Body of pancreas (tissue), 4 donors: ENCODE measurements at regions of chr10 and their contacts with region 1.

Region 1: GRCh38 chr10:77377678-77378352 is 259.8 kb downstream of the KCNMA1 start:
- DNase-seq: peak; percentile 50 to 74 (median 67)
- ATAC-seq: peak; percentile 78
- H3K4me3 ChIP-seq: no peak overlapping the region
- H3K27ac ChIP-seq: peak overlapping the region; percentile 18 to 53 (median 33)
- H3K4me1 ChIP-seq: peaks cover 40% of the 10 kb centered on the region
- H3K27me3 ChIP-seq: no peaks in the 10 kb centered on the region
- CTCF ChIP-seq: peak; percentile 17 to 70 (median 58)
- POLR2A ChIP-seq: no peak

Region 2: GRCh38 chr10:76382381-76382851 is 995.4 kb before region 1 on chr10:
- intact Hi-C with region 1: no loop called
- DNase-seq: no peak
- ATAC-seq: no peak
- H3K4me3 ChIP-seq: no peak overlapping the region
- H3K27ac ChIP-seq: no peak overlapping the region
- H3K4me1 ChIP-seq: no peaks in the 10 kb centered on the region
- H3K27me3 ChIP-seq: no peaks in the 10 kb centered on the region
- CTCF ChIP-seq: no peak
- POLR2A ChIP-seq: no peak

Region 3: GRCh38 chr10:76632777-76633071 is 745.1 kb before region 1 on chr10:
- intact Hi-C with region 1: no loop called
- DNase-seq: peak; percentile 61 to 71 (median 68)
- ATAC-seq: peak; percentile 81
- H3K4me3 ChIP-seq: no peak overlapping the region
- H3K27ac ChIP-seq: no peak overlapping the region
- H3K4me1 ChIP-seq: no peaks in the 10 kb centered on the region
- H3K27me3 ChIP-seq: no peaks in the 10 kb centered on the region
- CTCF ChIP-seq: peak; percentile 27 to 73 (median 63)
- POLR2A ChIP-seq: no peak

Region 4: DNA sequence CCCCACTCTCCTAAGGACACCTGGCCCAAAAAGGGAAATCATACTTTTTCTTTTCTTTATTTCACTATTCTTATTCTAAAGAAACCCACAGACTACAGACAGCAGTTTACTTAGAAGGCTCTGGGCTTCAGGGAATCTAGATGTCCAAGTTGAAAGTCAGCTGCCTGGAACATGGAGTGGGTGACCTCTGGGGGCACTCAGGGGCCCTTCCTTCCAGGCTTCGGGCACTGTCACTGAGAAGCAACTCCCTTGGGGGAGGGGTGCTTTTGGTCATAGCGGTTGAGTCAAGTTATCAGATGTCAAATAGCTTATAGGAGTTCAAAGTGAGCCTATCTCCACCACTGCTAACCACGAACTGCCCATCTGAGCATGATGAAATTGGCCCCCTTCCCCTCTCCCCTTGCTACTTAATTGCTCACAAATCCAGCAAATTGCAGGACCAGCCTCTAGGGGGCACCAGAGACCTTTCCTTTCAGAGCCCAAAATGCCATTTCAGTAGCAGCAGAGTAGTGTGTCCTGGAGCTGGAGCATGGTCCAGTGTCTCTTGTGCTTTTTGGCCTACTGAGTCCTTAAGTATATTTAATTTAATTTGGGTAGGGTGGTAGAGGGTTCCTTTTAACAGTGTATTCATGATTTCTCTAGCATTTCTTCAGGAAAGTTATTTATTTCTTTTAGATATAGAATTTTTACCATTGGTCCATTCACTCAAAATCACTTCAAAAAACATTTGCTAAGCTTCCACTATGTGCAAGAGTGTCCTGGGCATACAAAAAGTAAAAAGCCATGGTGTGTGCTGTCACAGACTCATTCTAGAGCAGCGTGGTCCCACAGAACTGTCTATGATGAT is 204.0 kb before region 1 on chr10:
- intact Hi-C with region 1: loop called (anchors 10 kb)
- DNase-seq: peak; percentile 78 to 87 (median 80)
- ATAC-seq: peak; percentile 79
- H3K4me3 ChIP-seq: no peak overlapping the region
- H3K27ac ChIP-seq: no peak overlapping the region
- H3K4me1 ChIP-seq: no peaks in the 10 kb centered on the region
- H3K27me3 ChIP-seq: no peaks in the 10 kb centered on the region
- CTCF ChIP-seq: peak; percentile 69 to 94 (median 90)
- POLR2A ChIP-seq: no peak

Region 5: GRCh38 chr10:77641788-77642397 is 264.1 kb after region 1 on chr10:
- intact Hi-C with region 1: loop called (anchors 5 kb)
- DNase-seq: peak; percentile 80 to 87 (median 82)
- ATAC-seq: peak; percentile 63
- H3K4me3 ChIP-seq: no peak overlapping the region
- H3K27ac ChIP-seq: no peak overlapping the region
- H3K4me1 ChIP-seq: peaks cover 20% of the 10 kb centered on the region
- H3K27me3 ChIP-seq: peaks cover 0 to 3% of the 10 kb centered on the region in 2 donors
- CTCF ChIP-seq: peak; percentile 57 to 95 (median 92)
- POLR2A ChIP-seq: no peak